ENCODE measurements at regions of chr10 and their contacts with region 1.

Region 1: GRCh38 chr10:122142641-122143237 is 128.4 kb upstream of the BTBD16 start:
- DNase-seq: peak in 2 of 3 donors; percentile 48 to 68
- ATAC-seq: peak; percentile 55 to 70 (median 68)
- H3K4me3 ChIP-seq: no peak overlapping the region
- H3K27ac ChIP-seq: peak overlapping the region in 2 of 3 donors; percentile 69 to 83
- H3K4me1 ChIP-seq: peaks cover 0 to 37% (median 17%) of the 10 kb centered on the region in 4 donors
- H3K27me3 ChIP-seq: no peaks in the 10 kb centered on the region
- CTCF ChIP-seq: peak; percentile 89 to 98 (median 96)
- POLR2A ChIP-seq: no peak

Region 2: GRCh38 chr10:121974019-121974534 is 168.7 kb before region 1 on chr10:
- intact Hi-C with region 1: no loop called
- DNase-seq: no peak
- ATAC-seq: peak in 2 of 4 donors; percentile 8 to 12
- H3K4me3 ChIP-seq: peak overlapping the region; percentile 84 to 97 (median 94)
- H3K27ac ChIP-seq: peak overlapping the region; percentile 94 to 100 (median 95)
- H3K4me1 ChIP-seq: peaks cover 0 to 48% (median 19%) of the 10 kb centered on the region in 4 donors
- H3K27me3 ChIP-seq: no peaks in the 10 kb centered on the region
- CTCF ChIP-seq: no peak
- POLR2A ChIP-seq: no peak

Region 3: GRCh38 chr10:122191936-122192541 is 49.3 kb after region 1 on chr10:
- intact Hi-C with region 1: loop called in 1 of 2 experiments (anchors 10 kb)
- DNase-seq: no peak
- ATAC-seq: no peak
- H3K4me3 ChIP-seq: no peak overlapping the region
- H3K27ac ChIP-seq: no peak overlapping the region
- H3K4me1 ChIP-seq: peaks cover 0 to 3% (median 0%) of the 10 kb centered on the region in 4 donors
- H3K27me3 ChIP-seq: no peaks in the 10 kb centered on the region
- CTCF ChIP-seq: no peak
- POLR2A ChIP-seq: no peak

Region 4: GRCh38 chr10:122279725-122280141 is 137.0 kb after region 1 on chr10:
- intact Hi-C with region 1: loop called in 1 of 2 experiments (anchors 10 kb)
- DNase-seq: peak in 1 of 3 donors; percentile 40
- ATAC-seq: peak; percentile 62 to 83 (median 73)
- H3K4me3 ChIP-seq: no peak overlapping the region
- H3K27ac ChIP-seq: no peak overlapping the region
- H3K4me1 ChIP-seq: no peaks in the 10 kb centered on the region
- H3K27me3 ChIP-seq: no peaks in the 10 kb centered on the region
- CTCF ChIP-seq: peak; percentile 41 to 62 (median 53)
- POLR2A ChIP-seq: no peak

Region 5: GRCh38 chr10:122368502-122369256 is 225.9 kb after region 1 on chr10:
- intact Hi-C with region 1: no loop called
- DNase-seq: no peak
- ATAC-seq: no peak
- H3K4me3 ChIP-seq: no peak overlapping the region
- H3K27ac ChIP-seq: no peak overlapping the region
- H3K4me1 ChIP-seq: peaks cover 0 to 10% (median 0%) of the 10 kb centered on the region in 4 donors
- H3K27me3 ChIP-seq: no peaks in the 10 kb centered on the region
- CTCF ChIP-seq: no peak
- POLR2A ChIP-seq: no peak